ENCODE measurements at regions of chr3 and their contacts with region 1.

Region 1: DNA sequence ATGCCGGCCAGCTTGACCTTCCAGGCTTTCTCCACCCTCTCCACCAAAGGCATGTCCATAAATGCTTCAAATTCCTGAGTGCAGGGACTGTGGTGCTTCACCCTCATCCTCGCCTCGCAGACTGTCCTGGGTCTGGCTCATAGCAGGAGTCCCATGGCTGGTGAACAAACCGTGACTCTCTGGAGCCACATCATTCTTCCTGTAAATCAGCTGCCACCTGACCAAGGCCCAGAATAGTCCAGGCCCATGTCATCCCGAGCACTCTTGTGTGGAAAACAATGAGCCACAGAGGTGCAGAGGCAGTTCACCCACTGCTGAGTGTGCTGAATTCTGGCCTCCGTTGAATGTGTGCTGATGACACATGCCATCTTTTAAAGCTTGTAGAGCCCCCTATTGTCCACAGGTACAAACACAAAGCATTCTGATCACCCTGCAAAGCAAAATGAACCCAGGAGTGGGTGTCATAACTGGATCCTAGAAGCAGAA is 68.6 kb downstream of the ABHD5 start:
- DNase-seq: peak in 2 of 5 donors; percentile 11 to 15
- H3K4me3 ChIP-seq: no peak overlapping the region
- H3K4me3 Mint-ChIP-seq: no peak overlapping the region
- H3K27ac ChIP-seq: no peak overlapping the region
- H3K27ac Mint-ChIP-seq: peak overlapping the region in 2 of 7 donors; percentile 2 to 38
- H3K4me1 ChIP-seq: peaks cover 32% of the 10 kb centered on the region
- H3K4me1 Mint-ChIP-seq: peaks cover 26 to 51% (median 41%) of the 10 kb centered on the region in 4 donors
- H3K27me3 ChIP-seq: no peaks in the 10 kb centered on the region
- H3K27me3 Mint-ChIP-seq: no peaks in the 10 kb centered on the region

Region 2: GRCh38 chr3:43621656-43622432 is 137.5 kb before region 1 on chr3 and contains the start of gene ANO10:
- CTCF ChIA-PET with region 1: interaction called, 4 read pairs
- POLR2A ChIA-PET with region 1: no interaction called
- intact Hi-C with region 1: loop called (anchors 5 kb)
- DNase-seq: peak; percentile 91 to 93 (median 93)
- H3K4me3 ChIP-seq: peak within 1 kb of the TSS; percentile 36 to 59
- H3K4me3 Mint-ChIP-seq: peak within 1 kb of the TSS; percentile 88 to 94 (median 91)
- H3K27ac ChIP-seq: peak within 1 kb of the TSS; percentile 54
- H3K27ac Mint-ChIP-seq: peak within 1 kb of the TSS; percentile 77 to 96 (median 91)
- H3K4me1 ChIP-seq: peaks cover 12% of the 10 kb centered on the region
- H3K4me1 Mint-ChIP-seq: peaks cover 10 to 24% (median 13%) of the 10 kb centered on the region in 4 donors
- H3K27me3 ChIP-seq: no peaks in the 10 kb centered on the region
- H3K27me3 Mint-ChIP-seq: no peaks in the 10 kb centered on the region
- total RNA-seq, gene ANO10: 9.7 to 9.9 TPM

Region 3: GRCh38 chr3:43785551-43785950 is 26.2 kb after region 1 on chr3:
- CTCF ChIA-PET with region 1: no interaction called
- POLR2A ChIA-PET with region 1: no interaction called
- intact Hi-C with region 1: no loop called
- DNase-seq: no peak
- H3K4me3 ChIP-seq: no peak overlapping the region
- H3K4me3 Mint-ChIP-seq: no peak overlapping the region
- H3K27ac ChIP-seq: no peak overlapping the region
- H3K27ac Mint-ChIP-seq: no peak overlapping the region
- H3K4me1 ChIP-seq: no peaks in the 10 kb centered on the region
- H3K4me1 Mint-ChIP-seq: no peaks in the 10 kb centered on the region
- H3K27me3 ChIP-seq: no peaks in the 10 kb centered on the region
- H3K27me3 Mint-ChIP-seq: peaks cover 0 to 9% of the 10 kb centered on the region in 2 donors

Region 4: DNA sequence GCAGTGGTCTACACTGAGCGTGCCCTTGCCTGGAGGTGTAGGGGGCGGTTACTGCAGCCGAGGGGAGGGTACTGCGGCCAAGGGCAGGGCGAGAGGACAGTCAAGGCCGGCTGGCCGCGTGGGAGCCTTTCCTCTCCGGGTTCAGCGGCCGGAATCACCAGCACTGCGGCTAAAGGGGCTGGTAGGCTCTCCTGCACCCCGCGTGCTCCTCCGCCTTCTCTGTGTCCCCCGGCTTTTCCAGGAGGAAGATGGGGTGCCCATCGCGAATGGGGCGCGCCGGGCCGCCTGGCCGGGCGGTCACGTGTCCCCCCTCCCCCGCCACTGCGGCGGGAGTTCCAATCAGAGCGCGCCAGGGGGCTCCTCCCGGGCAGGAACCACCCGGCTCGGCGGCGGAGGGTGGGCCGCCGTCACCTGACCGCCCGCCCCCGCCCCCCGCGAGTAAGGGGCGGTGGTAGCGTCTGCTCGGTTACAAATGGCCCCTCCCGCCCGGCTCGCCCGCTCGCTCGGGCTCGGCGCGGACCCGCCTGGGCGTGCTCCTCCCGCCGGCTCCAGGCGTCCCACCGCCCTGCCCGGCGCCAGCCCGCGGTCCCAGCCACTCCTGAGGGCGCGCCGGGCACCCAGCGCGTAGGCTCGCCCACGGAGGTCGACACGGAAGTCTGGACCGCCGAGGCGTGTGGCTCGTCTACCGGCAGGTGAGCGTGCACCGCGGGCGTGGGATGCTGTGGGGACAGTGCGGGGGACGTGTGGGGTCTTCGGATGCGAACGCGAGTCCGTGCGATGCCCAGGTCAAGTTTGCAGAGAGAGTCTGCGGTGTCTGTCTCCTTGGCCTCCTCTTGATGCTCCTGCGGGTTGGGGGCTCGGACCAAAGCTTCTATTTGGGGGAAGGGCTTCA is 239.7 kb after region 1 on chr3:
- CTCF ChIA-PET with region 1: no interaction called
- POLR2A ChIA-PET with region 1: no interaction called
- intact Hi-C with region 1: no loop called
- DNase-seq: no peak
- H3K4me3 ChIP-seq: no peak overlapping the region
- H3K4me3 Mint-ChIP-seq: peak overlapping the region; percentile 59 to 88 (median 69)
- H3K27ac ChIP-seq: no peak overlapping the region
- H3K27ac Mint-ChIP-seq: no peak overlapping the region
- H3K4me1 ChIP-seq: peaks cover 44% of the 10 kb centered on the region
- H3K4me1 Mint-ChIP-seq: peaks cover 26 to 45% (median 39%) of the 10 kb centered on the region in 4 donors
- H3K27me3 ChIP-seq: peaks cover 45% of the 10 kb centered on the region
- H3K27me3 Mint-ChIP-seq: peaks cover 55 to 58% of the 10 kb centered on the region in 2 donors